Activated naive CD8-positive, alpha-beta T cell treated with anti-CD3 and anti-CD28 coated beads, Interleukin-2, amount 10 ng/mL, durations not matched to agents 7 days and 5 days (primary cell): ENCODE measurements at regions of chr5 and their contacts with region 1.

Region 1: GRCh38 chr5:134758504-134759341 is at the start of gene DDX46:
- DNase-seq: peak; percentile 95
- ATAC-seq: peak; percentile 98
- H3K4me3 Mint-ChIP-seq: peak within 1 kb of the TSS; percentile 99
- H3K27ac Mint-ChIP-seq: peak within 1 kb of the TSS; percentile 97
- H3K4me1 Mint-ChIP-seq: peaks cover 32% of the 10 kb centered on the region
- H3K27me3 Mint-ChIP-seq: no peaks in the 10 kb centered on the region
- total RNA-seq, gene DDX46: 72.7 to 76.5 TPM

Region 2: DNA sequence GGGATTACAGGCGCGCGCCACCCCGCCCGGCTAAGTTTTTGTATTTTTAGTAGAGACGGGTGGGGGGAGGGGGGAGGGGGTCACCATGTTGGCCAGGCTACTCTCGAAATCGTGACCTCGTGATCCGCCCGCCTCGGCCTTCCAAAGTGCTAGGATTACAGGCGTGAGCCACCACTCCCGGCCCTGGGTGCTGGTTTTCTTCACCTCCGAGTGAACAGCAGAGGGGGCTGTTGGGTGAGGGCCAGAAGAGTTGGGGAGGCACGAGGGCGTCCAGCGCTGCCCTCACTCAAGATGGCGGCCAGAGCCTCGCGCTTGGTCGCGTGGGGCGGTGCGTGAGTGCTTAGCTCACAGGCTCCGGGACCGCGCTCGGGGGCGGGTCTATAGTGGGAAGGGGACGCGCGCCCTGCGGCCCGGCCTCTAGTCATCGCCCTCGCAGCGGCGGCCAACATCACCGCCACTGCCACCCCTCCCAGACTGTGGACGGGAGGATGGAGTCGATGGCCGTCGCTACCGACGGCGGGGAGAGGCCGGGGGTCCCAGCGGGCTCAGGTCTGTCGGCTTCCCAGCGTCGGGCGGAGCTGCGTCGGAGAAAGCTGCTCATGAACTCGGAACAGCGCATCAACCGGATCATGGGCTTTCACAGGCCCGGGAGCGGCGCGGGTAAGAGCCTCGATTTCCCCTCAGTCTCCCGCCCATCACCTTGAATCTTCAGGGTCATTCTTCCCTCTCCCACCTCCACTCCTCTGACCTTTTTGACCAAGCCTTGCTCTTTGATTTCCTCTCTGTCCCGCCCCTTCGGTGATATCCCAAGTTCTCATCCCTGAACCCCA is 20.4 kb before region 1 on chr5 and contains the start of gene CAMLG:
- POLR2A ChIA-PET with region 1: interaction called, 26 read pairs
- DNase-seq: peak; percentile 96
- ATAC-seq: peak; percentile 99
- H3K4me3 Mint-ChIP-seq: peak within 1 kb of the TSS; percentile 93
- H3K27ac Mint-ChIP-seq: peak within 1 kb of the TSS; percentile 91
- H3K4me1 Mint-ChIP-seq: peaks cover 23% of the 10 kb centered on the region
- H3K27me3 Mint-ChIP-seq: no peaks in the 10 kb centered on the region
- total RNA-seq, gene CAMLG: 24.4 to 24.7 TPM